ENCODE measurements at regions of chr19 and their contacts with region 1.

Region 1: DNA sequence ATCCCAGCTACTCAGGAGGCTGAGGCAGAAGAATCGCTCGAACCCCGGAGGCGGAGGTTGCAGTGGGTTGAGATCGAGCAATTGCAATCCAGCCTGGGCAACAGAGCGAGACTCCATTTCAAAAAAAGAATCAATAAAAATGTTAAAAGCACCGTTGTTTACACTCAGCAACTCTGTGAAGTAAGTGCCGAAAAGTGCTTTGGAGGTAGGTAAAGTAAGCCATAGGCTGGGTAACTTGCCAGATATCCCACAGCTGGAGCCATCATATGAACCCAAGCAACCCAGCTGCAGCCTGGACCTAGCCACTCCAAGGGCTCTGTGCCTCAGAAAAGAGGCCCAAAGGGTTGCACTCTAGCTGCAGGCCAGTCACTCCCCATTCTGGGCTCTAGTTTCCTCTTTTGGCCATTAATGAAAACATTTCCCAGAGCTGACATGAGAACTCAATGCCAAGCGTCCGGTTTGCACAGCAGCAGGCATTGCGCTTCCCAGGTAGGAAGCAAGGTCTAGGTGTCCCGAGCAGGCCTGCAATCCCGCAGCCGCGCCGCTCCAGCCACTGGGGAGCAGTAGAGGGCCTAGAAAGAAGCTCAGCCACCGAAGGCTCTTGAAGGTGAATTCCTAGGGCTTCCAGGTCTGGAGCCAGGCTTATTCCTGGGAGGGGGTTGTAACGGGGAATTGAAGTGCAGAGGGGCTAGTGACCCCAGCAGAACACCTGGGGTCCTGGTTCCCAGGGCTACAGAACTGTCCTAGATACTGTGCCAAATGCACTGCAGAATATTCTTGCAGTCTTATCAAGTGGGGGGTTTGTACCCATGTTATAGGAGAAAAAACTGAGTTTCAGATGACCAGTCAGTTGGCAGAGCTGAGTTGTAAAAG is 4.1 kb upstream of the CD79A start:
- DNase-seq: peak; percentile 84
- H3K4me3 Mint-ChIP-seq: no peak overlapping the region
- H3K27ac Mint-ChIP-seq: peak overlapping the region; percentile 96
- H3K4me1 Mint-ChIP-seq: peaks cover 76% of the 10 kb centered on the region
- H3K27me3 Mint-ChIP-seq: no peaks in the 10 kb centered on the region

Region 2: GRCh38 chr19:41883821-41884733 is 11.1 kb after region 1 on chr19:
- CTCF ChIA-PET with region 1: interaction called, 68 read pairs
- intact Hi-C with region 1: loop called (anchors 1 kb)
- DNase-seq: peak; percentile 91
- H3K4me3 Mint-ChIP-seq: peak overlapping the region; percentile 90
- H3K27ac Mint-ChIP-seq: peak overlapping the region; percentile 92
- H3K4me1 Mint-ChIP-seq: peaks cover 54% of the 10 kb centered on the region
- H3K27me3 Mint-ChIP-seq: no peaks in the 10 kb centered on the region

Region 3: GRCh38 chr19:41912899-41913537 is 40.0 kb after region 1 on chr19:
- CTCF ChIA-PET with region 1: no interaction called
- intact Hi-C with region 1: no loop called
- DNase-seq: no peak
- H3K4me3 Mint-ChIP-seq: no peak overlapping the region
- H3K27ac Mint-ChIP-seq: no peak overlapping the region
- H3K4me1 Mint-ChIP-seq: peaks cover 34% of the 10 kb centered on the region
- H3K27me3 Mint-ChIP-seq: peaks cover 21% of the 10 kb centered on the region

Region 4: GRCh38 chr19:41928221-41928683 is 55.2 kb after region 1 on chr19 and contains the start of gene ERFL:
- CTCF ChIA-PET with region 1: interaction called, 13 read pairs
- intact Hi-C with region 1: no loop called
- DNase-seq: peak; percentile 40
- H3K4me3 Mint-ChIP-seq: peak within 1 kb of the TSS; percentile 77
- H3K27ac Mint-ChIP-seq: peak within 1 kb of the TSS; percentile 40
- H3K4me1 Mint-ChIP-seq: peaks cover 21% of the 10 kb centered on the region
- H3K27me3 Mint-ChIP-seq: no peaks in the 10 kb centered on the region
- total RNA-seq, gene ERFL: 0.99 to 1.3 TPM

Region 5: DNA sequence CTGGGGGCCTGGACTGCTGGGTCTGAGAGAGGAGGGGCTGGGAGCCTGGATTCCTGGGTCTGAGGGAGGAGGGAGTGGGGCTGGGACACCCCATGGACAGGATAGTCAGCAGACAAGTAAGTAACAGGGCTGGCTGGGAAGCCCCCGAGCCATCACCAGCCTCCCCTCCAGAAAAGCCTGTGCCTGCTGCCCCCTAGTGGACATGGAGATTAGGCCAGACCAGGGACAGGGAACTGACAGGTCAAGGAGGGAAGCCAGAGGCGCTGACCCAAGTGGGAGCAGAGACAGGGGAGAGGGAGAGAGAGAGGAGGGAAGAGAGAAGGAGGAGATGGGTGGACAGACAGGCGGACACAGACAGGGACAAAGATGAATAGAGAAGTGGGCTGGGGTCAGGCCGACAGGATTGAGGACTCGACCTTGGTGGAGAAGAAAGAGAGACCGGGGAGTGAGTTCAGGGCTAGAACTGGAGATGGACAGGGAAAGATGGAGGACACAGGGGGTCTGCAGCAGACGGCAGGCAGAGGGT is 61.9 kb after region 1 on chr19:
- CTCF ChIA-PET with region 1: interaction called, 13 read pairs
- intact Hi-C with region 1: loop called (anchors 1 kb)
- DNase-seq: peak; percentile 94
- H3K4me3 Mint-ChIP-seq: no peak overlapping the region
- H3K27ac Mint-ChIP-seq: peak overlapping the region; percentile 44
- H3K4me1 Mint-ChIP-seq: peaks cover 39% of the 10 kb centered on the region
- H3K27me3 Mint-ChIP-seq: no peaks in the 10 kb centered on the region

Region 6: GRCh38 chr19:41945135-41945766 is 72.2 kb after region 1 on chr19:
- CTCF ChIA-PET with region 1: interaction called, 51 read pairs
- intact Hi-C with region 1: loop called (anchors 1 kb)
- DNase-seq: peak; percentile 98
- H3K4me3 Mint-ChIP-seq: peak overlapping the region; percentile 48
- H3K27ac Mint-ChIP-seq: peak overlapping the region; percentile 93
- H3K4me1 Mint-ChIP-seq: peaks cover 42% of the 10 kb centered on the region
- H3K27me3 Mint-ChIP-seq: no peaks in the 10 kb centered on the region

Region 7: GRCh38 chr19:41951686-41952172 is 78.7 kb after region 1 on chr19:
- CTCF ChIA-PET with region 1: interaction called, 51 read pairs
- intact Hi-C with region 1: loop called (anchors 1 kb)
- DNase-seq: peak; percentile 95
- H3K4me3 Mint-ChIP-seq: no peak overlapping the region
- H3K27ac Mint-ChIP-seq: peak overlapping the region; percentile 63
- H3K4me1 Mint-ChIP-seq: peaks cover 14% of the 10 kb centered on the region
- H3K27me3 Mint-ChIP-seq: no peaks in the 10 kb centered on the region

Region 8: GRCh38 chr19:41959056-41960053 is 86.3 kb after region 1 on chr19 and contains the start of gene RABAC1:
- CTCF ChIA-PET with region 1: interaction called, 21 read pairs
- intact Hi-C with region 1: no loop called
- DNase-seq: peak; percentile 95
- H3K4me3 Mint-ChIP-seq: peak within 1 kb of the TSS; percentile 95
- H3K27ac Mint-ChIP-seq: peak within 1 kb of the TSS; percentile 81
- H3K4me1 Mint-ChIP-seq: peaks cover 13% of the 10 kb centered on the region
- H3K27me3 Mint-ChIP-seq: no peaks in the 10 kb centered on the region
- total RNA-seq, gene RABAC1: 32.8 TPM

Measured in activated naive CD4-positive, alpha-beta T cell treated with anti-CD3 and anti-CD28 coated beads for 36 hours (primary cell).